ENCODE measurements at regions of chr20 and their contacts with region 1.

Region 1: GRCh38 chr20:23879811-23880374 is 345 bp upstream of the CST5 start:
- DNase-seq: peak; percentile 89 to 96
- H3K4me3 ChIP-seq: no peak overlapping the region
- H3K27ac ChIP-seq: peak overlapping the region; percentile 71
- H3K4me1 ChIP-seq: peaks cover 78% of the 10 kb centered on the region
- H3K27me3 ChIP-seq: no peaks in the 10 kb centered on the region
- CTCF ChIP-seq: no peak

Region 2: GRCh38 chr20:23357767-23358591 is 521.9 kb before region 1 on chr20:
- CTCF ChIA-PET with region 1: interaction called, 13 read pairs
- POLR2A ChIA-PET with region 1: no interaction called
- intact Hi-C with region 1: no loop called
- DNase-seq: peak; percentile 98 to 100
- H3K4me3 ChIP-seq: peak overlapping the region; percentile 86
- H3K27ac ChIP-seq: peak overlapping the region; percentile 90
- H3K4me1 ChIP-seq: peaks cover 29% of the 10 kb centered on the region
- H3K27me3 ChIP-seq: no peaks in the 10 kb centered on the region
- CTCF ChIP-seq: no peak; the same call in 1 of the 2 replicates

Region 3: DNA sequence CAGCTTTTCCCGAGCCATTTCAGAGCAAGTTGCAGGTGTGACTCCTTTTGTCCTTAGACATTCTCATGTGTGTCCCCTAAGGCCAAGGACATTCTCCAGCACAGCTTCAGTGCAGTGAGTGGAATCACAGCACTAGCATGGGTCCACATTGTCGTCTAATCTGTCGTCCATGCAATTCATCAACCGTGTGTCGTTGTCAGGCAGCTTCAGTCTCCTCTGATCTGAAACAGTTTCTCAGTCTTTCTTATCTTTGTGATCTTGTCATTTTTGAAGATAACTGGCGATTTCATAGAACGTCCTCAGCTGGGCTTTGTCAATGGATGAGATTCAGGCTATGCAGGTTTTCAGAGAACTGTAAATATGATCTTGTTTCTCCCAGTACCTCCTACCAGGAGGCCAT is 85.1 kb before region 1 on chr20:
- CTCF ChIA-PET with region 1: no interaction called
- POLR2A ChIA-PET with region 1: no interaction called
- intact Hi-C with region 1: loop called (anchors 2 kb)
- DNase-seq: peak in 1 of 2 experiments; percentile 43
- H3K4me3 ChIP-seq: no peak overlapping the region
- H3K27ac ChIP-seq: peak overlapping the region; percentile 86
- H3K4me1 ChIP-seq: peaks cover 28% of the 10 kb centered on the region
- H3K27me3 ChIP-seq: no peaks in the 10 kb centered on the region
- CTCF ChIP-seq: no peak

Region 4: GRCh38 chr20:23826541-23827021 is 53.3 kb before region 1 on chr20 and contains the start of gene CST2:
- CTCF ChIA-PET with region 1: no interaction called
- POLR2A ChIA-PET with region 1: interaction called, 3 read pairs
- intact Hi-C with region 1: loop called (anchors 2 kb)
- DNase-seq: peak; percentile 59 to 67
- H3K4me3 ChIP-seq: no peak within 1 kb of the TSS
- H3K27ac ChIP-seq: peak within 1 kb of the TSS; percentile 42
- H3K4me1 ChIP-seq: peaks cover 32% of the 10 kb centered on the region
- H3K27me3 ChIP-seq: no peaks in the 10 kb centered on the region
- CTCF ChIP-seq: no peak
- total RNA-seq, gene CST2: not detected in 2 replicates

Region 5: DNA sequence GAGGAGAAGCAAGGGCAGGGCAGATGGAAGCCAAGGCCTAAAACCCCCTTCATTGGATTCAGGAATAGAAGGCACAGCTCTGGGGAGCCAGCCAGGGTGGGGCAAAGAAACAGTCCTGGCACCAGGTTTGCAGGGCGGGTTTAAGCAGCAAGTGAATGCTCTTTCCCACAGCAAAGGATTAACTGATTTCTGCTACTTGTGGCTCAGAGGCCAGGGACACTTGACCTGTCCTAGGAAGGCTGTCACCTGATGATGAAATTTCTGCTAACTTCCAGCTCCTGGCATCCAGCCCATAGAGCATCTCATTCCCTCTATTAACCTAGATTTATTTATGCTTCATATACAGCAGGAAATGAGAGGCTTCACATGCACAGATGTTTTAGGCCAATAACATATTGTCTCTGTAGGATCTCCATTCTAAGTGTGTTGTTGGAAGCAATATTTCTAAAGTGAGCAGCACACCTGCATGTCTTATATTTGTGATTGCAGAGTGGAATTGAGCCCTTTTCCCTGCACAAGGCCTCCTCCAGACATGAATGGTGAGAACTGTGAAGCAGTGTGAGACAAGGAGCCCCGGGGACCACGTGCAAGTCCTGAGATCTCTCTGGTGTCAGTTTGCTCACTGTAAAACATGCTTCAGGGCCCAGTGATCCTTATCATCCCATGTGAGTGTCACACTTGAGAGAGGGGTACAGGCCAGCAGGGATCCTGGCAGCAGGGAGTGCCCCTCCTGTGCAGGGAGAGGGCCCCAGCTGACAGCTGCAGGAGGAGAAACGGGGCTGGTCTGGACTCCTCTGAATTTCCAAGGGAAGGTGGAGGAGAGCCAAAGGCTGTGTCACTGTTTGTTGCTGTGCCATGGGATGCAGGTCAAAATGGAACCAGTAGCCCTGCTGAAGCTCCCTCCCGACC is 40.8 kb after region 1 on chr20:
- CTCF ChIA-PET with region 1: no interaction called
- POLR2A ChIA-PET with region 1: no interaction called
- intact Hi-C with region 1: loop called (anchors 1 kb)
- DNase-seq: no peak
- H3K4me3 ChIP-seq: no peak overlapping the region
- H3K27ac ChIP-seq: peak overlapping the region; percentile 47
- H3K4me1 ChIP-seq: peaks cover 31% of the 10 kb centered on the region
- H3K27me3 ChIP-seq: no peaks in the 10 kb centered on the region
- CTCF ChIP-seq: no peak

Measured in PC-9 (cell line).